Mammary epithelial cell (primary cell): ENCODE measurements at regions of chr1 and their contacts with region 1.

Region 1: GRCh38 chr1:198903203-198903602 is 264.4 kb downstream of the PTPRC start:
- DNase-seq: peak; percentile 44
- H3K4me3 ChIP-seq: peak overlapping the region in 2 of 3 experiments; percentile 10 to 24
- H3K27ac ChIP-seq: peak overlapping the region; percentile 75
- H3K4me1 ChIP-seq: peaks cover 39% of the 10 kb centered on the region
- H3K27me3 ChIP-seq: no peaks in the 10 kb centered on the region
- CTCF ChIP-seq: no peak

Region 2: GRCh38 chr1:198880818-198881597 is 22.2 kb before region 1 on chr1:
- CTCF ChIA-PET with region 1: no interaction called
- dilution Hi-C with region 1: no loop called
- in situ Hi-C with region 1: no loop called
- intact Hi-C with region 1: loop called (anchors 2 kb)
- DNase-seq: peak; percentile 87
- H3K4me3 ChIP-seq: no peak overlapping the region
- H3K27ac ChIP-seq: peak overlapping the region; percentile 58
- H3K4me1 ChIP-seq: peaks cover 8% of the 10 kb centered on the region
- H3K27me3 ChIP-seq: no peaks in the 10 kb centered on the region
- CTCF ChIP-seq: no peak

Region 3: GRCh38 chr1:199422198-199422597 is 519.0 kb after region 1 on chr1:
- CTCF ChIA-PET with region 1: no interaction called
- dilution Hi-C with region 1: no loop called
- in situ Hi-C with region 1: no loop called
- intact Hi-C with region 1: loop called (anchors 10 kb)
- DNase-seq: peak; percentile 45
- H3K4me3 ChIP-seq: no peak overlapping the region
- H3K27ac ChIP-seq: no peak overlapping the region
- H3K4me1 ChIP-seq: no peaks in the 10 kb centered on the region
- H3K27me3 ChIP-seq: no peaks in the 10 kb centered on the region
- CTCF ChIP-seq: peak; percentile 44 to 69